H1 (cell line): ENCODE measurements at regions of chr13 and their contacts with region 1.

Region 1: DNA sequence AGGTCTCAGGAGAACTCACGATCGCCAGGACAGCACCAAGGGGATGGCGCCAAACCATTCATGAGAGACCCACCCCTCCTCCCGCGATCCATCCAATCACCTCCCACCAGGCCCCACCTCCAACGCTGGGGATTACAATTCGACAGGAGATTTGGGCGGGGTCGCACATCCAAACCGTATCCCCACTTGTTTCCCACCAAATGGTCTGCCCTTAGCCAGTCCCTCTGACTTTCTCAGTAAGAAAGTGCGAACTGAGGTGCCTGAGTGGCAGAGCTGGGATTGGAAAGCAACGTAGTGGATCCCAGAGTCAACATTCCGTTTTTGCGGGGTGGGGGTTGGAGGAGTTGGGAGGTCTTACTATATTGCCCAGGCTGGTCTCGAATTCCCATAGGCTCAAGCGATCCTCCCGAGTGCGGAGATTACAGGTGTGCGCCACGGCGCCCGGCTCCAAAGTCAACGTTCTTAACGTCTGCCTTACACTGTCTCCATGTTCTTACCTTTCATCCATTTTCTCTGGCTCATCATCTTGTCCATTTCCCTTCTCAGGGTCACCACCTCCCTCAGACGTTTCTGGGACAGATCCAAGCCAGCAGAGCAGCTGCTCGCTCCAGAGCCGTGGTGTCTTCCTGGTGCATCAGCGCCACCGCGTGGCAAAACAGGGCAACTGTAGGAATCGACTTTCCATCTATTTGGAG is 102.7 kb upstream of the ABCC4 start:
- DNase-seq: peak; percentile 74 to 92
- H3K4me3 ChIP-seq: peak overlapping the region; percentile 47 to 74 (median 68)
- H3K27ac ChIP-seq: no peak overlapping the region
- H3K4me1 ChIP-seq: peaks cover 2 to 3% (median 3%) of the 10 kb centered on the region in 4 experiments; a peak in 3 of 7 replicates
- H3K27me3 ChIP-seq: 0 out of 7 replicates have a peak, but pooled peaks cover 0 to 2% (median 0%) of the 10 kb centered on the region in 4 experiments
- CTCF ChIP-seq: peak; percentile 85 to 94 (median 91)
- EP300 ChIP-seq: no peak
- POLR2A ChIP-seq: peak in 1 of 2 experiments; percentile 55; a peak in 2 of 3 replicates
- RAD21 ChIP-seq: peak; percentile 99 to 100

Region 2: DNA sequence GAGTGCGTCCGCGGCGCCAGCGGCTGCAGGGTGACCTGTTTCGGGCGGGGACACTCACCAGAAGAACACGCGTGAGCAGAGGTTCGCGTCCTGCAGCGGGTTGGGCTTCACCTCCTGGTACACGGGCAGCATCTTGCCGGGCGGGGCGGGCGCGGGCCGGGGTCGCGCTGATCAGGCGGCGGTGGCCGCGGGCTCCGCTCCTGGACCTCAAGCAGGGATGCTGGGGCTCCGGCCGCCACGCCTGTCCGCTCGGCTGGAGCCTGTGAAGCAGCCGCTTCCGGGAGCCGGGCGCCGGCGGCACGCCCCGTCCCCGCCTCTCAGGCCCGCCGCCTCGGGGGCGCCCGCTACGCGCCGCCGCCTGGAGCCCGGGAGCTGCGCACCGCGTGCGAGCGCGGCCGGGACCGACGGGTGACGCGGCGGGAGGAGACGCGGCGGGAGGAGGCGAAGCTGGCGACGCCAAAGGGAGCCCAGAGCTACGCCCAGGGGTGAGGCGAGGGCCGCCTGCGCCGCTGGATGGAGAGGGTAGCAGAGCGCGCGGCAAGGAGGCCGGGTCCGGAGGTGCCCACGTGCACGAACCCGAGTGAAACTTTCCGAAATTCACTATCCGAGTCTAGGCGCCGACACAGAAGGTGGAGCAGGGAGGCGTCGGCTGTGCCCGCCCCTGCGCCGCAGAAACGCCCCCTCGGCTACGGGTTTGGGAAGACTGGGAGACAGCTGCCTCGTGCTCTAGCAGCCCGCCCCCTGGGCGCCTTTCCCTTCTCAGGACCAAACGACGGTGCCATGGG is 102.6 kb before region 1 on chr13 and contains the start of gene ABCC4:
- CTCF ChIA-PET with region 1: interaction called, 142 read pairs
- POLR2A ChIA-PET with region 1: interaction called, 7 read pairs
- DNase-seq: peak; percentile 25 to 82
- H3K4me3 ChIP-seq: peak within 1 kb of the TSS; percentile 56 to 92 (median 64)
- H3K27ac ChIP-seq: no peak within 1 kb of the TSS
- H3K4me1 ChIP-seq: peaks cover 0 to 4% (median 0%) of the 10 kb centered on the region in 4 experiments; a peak in 3 of 7 replicates
- H3K27me3 ChIP-seq: peaks cover 4 to 27% (median 20%) of the 10 kb centered on the region in 4 experiments
- CTCF ChIP-seq: no peak
- EP300 ChIP-seq: no peak
- POLR2A ChIP-seq: no peak; a peak in 1 of 3 replicates
- RAD21 ChIP-seq: no peak
- total RNA-seq, gene ABCC4: 14.1 TPM in 2 replicates

Region 3: GRCh38 chr13:95420501-95420900 is 16.5 kb after region 1 on chr13:
- CTCF ChIA-PET with region 1: interaction called, 10 read pairs
- POLR2A ChIA-PET with region 1: interaction called, 3 read pairs
- DNase-seq: no peak
- H3K4me3 ChIP-seq: no peak overlapping the region
- H3K27ac ChIP-seq: no peak overlapping the region
- H3K4me1 ChIP-seq: no peaks in the 10 kb centered on the region; a peak in 1 of 7 replicates
- H3K27me3 ChIP-seq: no peaks in the 10 kb centered on the region
- CTCF ChIP-seq: no peak
- EP300 ChIP-seq: no peak
- POLR2A ChIP-seq: no peak
- RAD21 ChIP-seq: no peak

Region 4: DNA sequence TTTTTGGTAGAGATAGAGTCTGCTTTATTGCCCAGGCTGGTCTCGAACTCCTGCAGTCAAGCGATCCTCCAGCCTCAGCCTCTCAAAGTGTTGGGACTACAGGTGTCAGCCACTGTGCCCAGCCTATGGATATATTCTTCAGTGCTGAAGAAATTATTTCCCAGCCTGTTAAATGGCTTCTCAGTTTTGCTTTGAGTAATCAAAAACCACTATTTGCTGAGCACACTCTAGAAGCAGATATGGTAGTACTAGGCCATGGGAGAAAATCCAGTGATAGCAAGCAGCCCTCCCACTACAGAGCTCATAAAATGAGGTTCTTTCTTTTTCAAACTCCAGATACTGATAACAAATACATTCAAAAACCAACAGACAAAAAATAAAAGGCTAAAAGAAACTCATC is 68.0 kb after region 1 on chr13:
- CTCF ChIA-PET with region 1: interaction called, 39 read pairs
- POLR2A ChIA-PET with region 1: no interaction called
- DNase-seq: no peak
- H3K4me3 ChIP-seq: no peak overlapping the region
- H3K27ac ChIP-seq: no peak overlapping the region
- H3K4me1 ChIP-seq: peaks cover 0 to 6% (median 2%) of the 10 kb centered on the region in 4 experiments; a peak in 2 of 7 replicates
- H3K27me3 ChIP-seq: no peaks in the 10 kb centered on the region; a peak in 1 of 7 replicates
- CTCF ChIP-seq: no peak
- EP300 ChIP-seq: no peak
- POLR2A ChIP-seq: no peak
- RAD21 ChIP-seq: no peak

Region 5: GRCh38 chr13:95834134-95834765 is 430.3 kb after region 1 on chr13:
- CTCF ChIA-PET with region 1: interaction called, 12 read pairs
- POLR2A ChIA-PET with region 1: no interaction called
- DNase-seq: peak; percentile 25 to 81
- H3K4me3 ChIP-seq: no peak overlapping the region
- H3K27ac ChIP-seq: no peak overlapping the region
- H3K4me1 ChIP-seq: no peaks in the 10 kb centered on the region
- H3K27me3 ChIP-seq: no peaks in the 10 kb centered on the region
- CTCF ChIP-seq: peak; percentile 82 to 87 (median 87)
- EP300 ChIP-seq: no peak
- POLR2A ChIP-seq: no peak
- RAD21 ChIP-seq: peak; percentile 98 to 99